Activated CD8-positive, alpha-beta memory T cell treated with anti-CD3 and anti-CD28 coated beads, Interleukin-2, amount 10 ng/mL, durations not matched to agents 7 days and 5 days (primary cell): ENCODE measurements at regions of chr20 and their contacts with region 1.

Region 1: GRCh38 chr20:44196271-44196670 is 9.3 kb upstream of the JPH2 start:
- DNase-seq: no peak
- ATAC-seq: no peak
- H3K4me3 Mint-ChIP-seq: no peak overlapping the region
- H3K27ac Mint-ChIP-seq: no peak overlapping the region
- H3K4me1 Mint-ChIP-seq: peaks cover 40% of the 10 kb centered on the region
- H3K27me3 Mint-ChIP-seq: peaks cover 7% of the 10 kb centered on the region

Region 2: GRCh38 chr20:44069203-44070011 is 126.9 kb before region 1 on chr20:
- CTCF ChIA-PET with region 1: no interaction called
- DNase-seq: peak; percentile 90
- ATAC-seq: peak; percentile 74
- H3K4me3 Mint-ChIP-seq: peak overlapping the region; percentile 56
- H3K27ac Mint-ChIP-seq: peak overlapping the region; percentile 91
- H3K4me1 Mint-ChIP-seq: peaks cover 37% of the 10 kb centered on the region
- H3K27me3 Mint-ChIP-seq: peaks cover 36% of the 10 kb centered on the region

Region 3: GRCh38 chr20:44115762-44116644 is 80.3 kb before region 1 on chr20:
- CTCF ChIA-PET with region 1: interaction called, 129 read pairs
- DNase-seq: no peak
- ATAC-seq: no peak
- H3K4me3 Mint-ChIP-seq: no peak overlapping the region
- H3K27ac Mint-ChIP-seq: no peak overlapping the region
- H3K4me1 Mint-ChIP-seq: peaks cover 9% of the 10 kb centered on the region
- H3K27me3 Mint-ChIP-seq: peaks cover 28% of the 10 kb centered on the region

Region 4: GRCh38 chr20:44209686-44210421 is 13.6 kb after region 1 on chr20:
- CTCF ChIA-PET with region 1: interaction called, 36 read pairs
- DNase-seq: peak; percentile 50
- ATAC-seq: no peak
- H3K4me3 Mint-ChIP-seq: peak overlapping the region; percentile 94
- H3K27ac Mint-ChIP-seq: peak overlapping the region; percentile 91
- H3K4me1 Mint-ChIP-seq: peaks cover 45% of the 10 kb centered on the region
- H3K27me3 Mint-ChIP-seq: no peaks in the 10 kb centered on the region